BJ (cell line): ENCODE measurements at regions of chr1 and their contacts with region 1.

Region 1: DNA sequence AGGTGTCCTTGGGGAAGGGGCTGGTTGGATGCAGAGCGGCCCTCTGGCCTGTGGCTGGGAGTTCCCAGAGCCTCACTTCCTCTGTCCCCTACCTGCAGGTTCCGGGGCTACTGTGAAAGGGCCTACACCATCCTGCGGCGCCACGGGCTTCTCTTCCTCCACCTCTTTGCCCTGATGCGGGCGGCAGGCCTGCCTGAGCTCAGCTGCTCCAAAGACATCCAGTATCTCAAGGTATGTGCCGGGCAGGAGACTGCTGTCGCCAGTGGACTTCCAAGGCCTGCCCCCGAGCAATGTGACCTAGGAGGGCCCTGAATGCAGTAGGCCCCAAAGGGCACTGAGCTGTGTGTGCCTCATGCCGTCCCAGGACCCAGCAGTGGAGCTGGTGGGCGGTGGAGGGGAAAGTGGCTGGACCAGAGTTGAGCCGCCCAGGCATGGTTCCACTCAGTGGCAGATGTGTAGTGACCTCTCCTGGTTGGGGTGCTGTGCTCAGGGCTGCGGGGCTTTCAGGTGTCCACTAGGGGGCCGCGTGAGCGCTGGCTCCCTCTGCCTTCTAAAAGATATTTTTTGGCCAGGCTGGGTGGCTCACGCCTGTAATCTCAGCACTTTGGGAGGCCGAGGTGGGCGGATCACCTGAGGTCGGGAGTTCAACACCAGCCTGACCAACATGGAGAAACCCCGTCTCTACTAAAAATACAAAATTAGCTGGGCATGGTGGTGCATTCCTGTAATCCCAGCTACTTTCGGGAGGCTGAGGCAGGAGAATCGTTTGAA is 73.4 kb downstream of the PIK3CD start:
- DNase-seq: no peak
- H3K4me3 ChIP-seq: no peak overlapping the region
- H3K27me3 ChIP-seq: no peaks in the 10 kb centered on the region
- CTCF ChIP-seq: peak; percentile 92

Region 2: GRCh38 chr1:9710037-9710436 is 14.9 kb before region 1 on chr1:
- CTCF ChIA-PET with region 1: interaction called, 18 read pairs
- POLR2A ChIA-PET with region 1: no interaction called
- DNase-seq: no peak
- H3K4me3 ChIP-seq: no peak overlapping the region
- H3K27me3 ChIP-seq: no peaks in the 10 kb centered on the region
- CTCF ChIP-seq: no peak

Region 3: DNA sequence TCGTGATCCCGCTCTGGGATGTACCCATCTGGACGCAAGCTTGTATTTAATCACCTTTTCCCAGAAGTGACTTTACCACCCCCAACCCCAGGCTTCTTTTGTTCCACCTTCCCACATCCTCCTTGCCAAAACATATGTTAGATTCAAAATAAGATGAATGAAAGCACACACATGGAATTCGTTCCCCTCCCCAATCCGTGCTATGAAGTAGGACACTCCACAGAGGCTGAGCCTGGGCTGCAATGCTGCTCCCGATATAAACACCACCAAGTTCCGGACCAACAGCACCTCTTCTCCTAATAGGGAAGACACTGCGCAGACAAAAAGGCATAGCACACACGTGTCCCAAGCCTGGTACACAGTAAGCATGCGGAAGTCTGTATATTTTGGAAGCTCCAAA is 12.8 kb after region 1 on chr1:
- CTCF ChIA-PET with region 1: interaction called, 6 read pairs
- POLR2A ChIA-PET with region 1: interaction called, 17 read pairs
- DNase-seq: no peak
- H3K4me3 ChIP-seq: no peak overlapping the region
- H3K27me3 ChIP-seq: no peaks in the 10 kb centered on the region
- CTCF ChIP-seq: no peak